PC-3 (cell line): ENCODE measurements at regions of chr9 and their contacts with region 1.

Region 1: DNA sequence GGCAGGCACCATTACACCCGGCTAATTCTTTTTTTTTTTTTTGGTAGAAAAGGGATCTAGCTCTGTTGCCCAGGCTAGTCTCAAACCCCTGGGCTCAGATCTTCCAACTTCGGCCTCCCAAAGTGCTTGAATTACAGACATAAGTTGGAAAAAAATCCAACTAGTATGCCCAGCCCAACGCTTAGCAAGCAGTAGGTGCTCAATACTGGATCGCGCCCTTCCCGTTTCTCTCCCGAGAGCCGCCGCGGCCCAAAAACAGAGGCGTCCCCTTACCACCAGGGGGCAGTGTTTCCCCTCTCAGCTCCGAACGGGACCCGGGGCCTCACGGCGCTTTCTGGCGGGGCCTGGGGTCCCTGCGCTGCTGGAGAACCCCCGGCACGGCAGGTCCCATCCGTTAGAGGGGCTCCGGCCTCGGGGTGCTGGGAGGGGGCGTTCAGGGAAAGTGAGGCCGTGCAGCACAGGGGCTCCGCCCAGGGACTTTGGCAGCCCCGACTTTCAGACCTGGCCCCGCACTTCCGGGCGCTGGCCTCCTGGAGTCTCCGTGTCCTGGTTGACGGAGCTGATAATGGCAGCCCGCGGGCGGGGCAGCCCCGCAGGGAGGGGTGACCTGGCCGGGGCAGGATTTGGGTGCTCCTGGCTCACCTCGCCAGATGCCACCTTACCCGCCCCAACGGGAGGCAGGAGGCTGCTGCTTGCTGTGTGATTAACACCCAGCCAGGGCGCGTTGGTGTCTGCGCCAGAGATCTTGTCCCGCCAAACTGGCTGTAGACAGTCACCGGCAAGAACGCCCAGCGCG is 15.2 kb downstream of the PTGES start:
- DNase-seq: peak; percentile 74
- ATAC-seq: peak; percentile 88
- H3K4me3 ChIP-seq: peak overlapping the region; percentile 72
- H3K27ac ChIP-seq: peak overlapping the region; percentile 29; the same call in 1 of the 2 replicates
- H3K4me1 ChIP-seq: peaks cover 4% of the 10 kb centered on the region; the same call in 1 of the 2 replicates
- H3K27me3 ChIP-seq: no peaks in the 10 kb centered on the region
- CTCF ChIP-seq: peak; percentile 80

Region 2: DNA sequence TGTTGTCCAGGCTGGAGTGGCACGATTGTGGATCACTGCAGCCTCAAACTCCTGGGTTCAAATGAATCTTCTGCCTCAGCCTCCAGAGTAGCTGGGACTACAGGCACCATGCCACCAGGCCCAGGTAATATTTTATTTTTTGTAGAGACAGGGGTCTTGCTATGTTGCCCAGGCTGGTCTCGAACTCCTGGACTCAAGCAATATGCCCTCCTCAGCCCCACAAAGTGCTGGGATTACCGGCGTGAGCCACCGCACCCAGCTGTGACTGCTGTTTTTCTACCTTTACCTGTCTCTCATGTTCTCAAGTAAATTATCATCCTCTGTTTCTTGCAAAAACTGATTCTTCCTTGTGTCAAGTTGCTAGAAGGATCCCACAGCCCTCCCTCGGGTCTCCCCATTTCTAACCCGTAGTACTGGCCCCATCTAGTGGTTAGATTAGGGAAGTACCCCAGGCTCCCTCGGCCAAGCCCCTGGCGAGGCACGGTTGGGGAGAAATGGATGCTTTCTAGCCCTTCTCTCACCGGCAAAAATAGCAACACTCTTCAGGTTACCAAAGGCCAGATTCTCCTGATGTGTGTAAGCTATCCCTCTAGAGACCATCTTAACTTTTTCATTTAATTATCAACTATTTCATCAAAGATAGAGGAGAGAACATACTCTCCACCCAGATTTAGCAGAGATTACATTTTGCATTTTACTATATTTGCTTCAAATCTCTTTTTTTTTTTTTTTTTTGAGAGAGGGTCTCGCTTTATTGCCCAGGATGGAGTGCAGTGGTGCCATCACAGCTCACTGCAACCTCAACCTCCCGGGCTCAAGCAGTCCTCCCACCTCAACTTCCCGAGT is 46.1 kb after region 1 on chr9:
- CTCF ChIA-PET with region 1: no interaction called
- POLR2A ChIA-PET with region 1: no interaction called
- intact Hi-C with region 1: loop called (anchors 1 kb)
- DNase-seq: peak; percentile 79
- ATAC-seq: peak; percentile 84
- H3K4me3 ChIP-seq: no peak overlapping the region
- H3K27ac ChIP-seq: no peak overlapping the region
- H3K4me1 ChIP-seq: no peaks in the 10 kb centered on the region
- H3K27me3 ChIP-seq: no peaks in the 10 kb centered on the region
- CTCF ChIP-seq: peak; percentile 83

Region 3: DNA sequence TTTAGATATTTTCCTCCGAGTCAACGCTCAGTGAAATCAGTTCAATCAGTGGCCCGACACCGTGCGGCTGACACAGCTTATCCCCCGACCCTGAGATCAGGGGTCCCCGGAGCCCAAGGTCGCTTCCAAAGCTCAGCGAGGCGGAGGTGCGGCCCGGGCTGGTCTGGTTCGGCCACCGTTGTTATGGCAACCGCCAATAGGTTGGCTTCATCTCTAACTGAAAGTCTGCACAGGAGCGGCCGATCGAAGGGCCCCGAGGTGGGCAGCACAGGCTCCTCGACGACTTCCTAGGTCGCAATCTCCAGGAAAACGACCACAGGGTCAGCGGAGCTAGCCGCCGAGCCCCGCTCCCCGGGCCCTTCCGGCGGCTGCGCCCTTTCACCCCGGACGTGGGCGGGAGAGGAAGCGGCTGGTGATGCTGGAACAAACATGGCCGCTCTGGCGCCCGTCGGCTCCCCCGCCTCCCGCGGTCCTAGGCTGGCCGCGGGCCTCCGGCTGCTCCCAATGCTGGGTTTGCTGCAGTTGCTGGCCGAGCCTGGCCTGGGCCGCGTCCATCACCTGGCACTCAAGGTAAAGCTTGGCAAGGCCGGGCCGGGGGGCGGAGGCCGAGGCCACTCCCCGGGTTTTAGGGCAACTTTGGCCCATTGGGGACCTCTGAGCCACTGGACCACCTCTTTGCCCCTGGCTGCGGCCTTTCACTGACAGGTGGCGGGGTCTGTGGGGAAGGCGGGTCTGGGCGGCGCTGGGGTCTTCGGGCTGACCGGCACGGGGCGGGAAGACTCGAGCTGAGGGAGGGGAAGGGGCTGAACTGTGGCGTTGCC is 316.0 kb after region 1 on chr9 and contains the start of gene GPR107:
- CTCF ChIA-PET with region 1: no interaction called
- POLR2A ChIA-PET with region 1: no interaction called
- intact Hi-C with region 1: no loop called
- DNase-seq: peak; percentile 56
- ATAC-seq: peak; percentile 86
- H3K4me3 ChIP-seq: peak within 1 kb of the TSS; percentile 95
- H3K27ac ChIP-seq: peak within 1 kb of the TSS; percentile 70
- H3K4me1 ChIP-seq: peaks cover 23% of the 10 kb centered on the region
- H3K27me3 ChIP-seq: no peaks in the 10 kb centered on the region
- CTCF ChIP-seq: no peak
- total RNA-seq, gene GPR107: 11.4 and 15.4 TPM in 2 replicates

Region 4: GRCh38 chr9:130199605-130200004 is 461.9 kb after region 1 on chr9:
- CTCF ChIA-PET with region 1: no interaction called
- POLR2A ChIA-PET with region 1: no interaction called
- intact Hi-C with region 1: no loop called
- DNase-seq: no peak
- ATAC-seq: no peak
- H3K4me3 ChIP-seq: no peak overlapping the region
- H3K27ac ChIP-seq: no peak overlapping the region
- H3K4me1 ChIP-seq: no peaks in the 10 kb centered on the region
- H3K27me3 ChIP-seq: no peaks in the 10 kb centered on the region
- CTCF ChIP-seq: no peak